Panc1 (cell line): ENCODE measurements at regions of chr9 and their contacts with region 1.

Region 1: DNA sequence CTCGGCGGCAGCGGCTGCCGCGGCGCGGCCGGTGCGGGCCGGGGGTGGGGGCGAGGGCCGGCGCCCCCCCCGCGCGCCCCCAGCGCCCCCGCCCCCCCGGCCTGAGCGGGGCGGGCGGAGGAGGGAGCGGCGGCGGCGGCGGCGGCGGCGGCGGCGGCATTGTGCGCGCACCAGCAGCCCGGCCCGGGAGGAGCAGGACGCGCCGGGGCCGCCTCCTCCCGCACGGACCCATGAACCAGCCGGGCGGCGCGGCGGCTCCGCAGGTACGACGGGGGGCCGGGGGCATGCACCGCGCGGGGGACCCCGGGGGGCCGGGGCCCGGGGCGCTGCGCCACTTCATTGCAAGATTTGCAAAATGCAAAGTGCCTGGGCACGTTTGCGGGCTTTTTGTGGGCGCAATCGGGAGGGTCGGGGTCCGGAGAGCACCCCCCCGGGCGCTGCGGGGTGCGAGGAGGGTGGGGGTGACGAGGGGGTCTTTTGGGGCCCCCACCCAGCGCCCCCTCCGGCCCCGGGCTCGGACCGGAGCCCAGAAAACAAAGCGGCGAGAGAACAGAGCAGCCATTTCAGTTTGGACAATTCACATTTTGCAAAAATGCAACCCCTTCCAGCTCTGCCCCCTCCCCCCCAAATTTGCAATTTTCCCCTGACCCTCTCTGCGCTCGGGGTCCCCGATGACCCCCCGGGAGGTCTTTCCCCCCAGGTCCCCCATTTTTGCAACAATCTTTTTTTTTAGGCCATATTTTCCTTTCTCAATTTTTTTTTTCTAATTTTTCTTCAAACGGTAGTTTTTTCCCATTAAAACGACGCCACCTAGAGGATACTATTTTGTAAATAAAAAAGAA is at the start of gene ZNF618:
- DNase-seq: no peak
- ATAC-seq: peak; percentile 98
- H3K4me3 ChIP-seq: peak within 1 kb of the TSS; percentile 50 to 53
- H3K27ac ChIP-seq: no peak within 1 kb of the TSS
- H3K4me1 ChIP-seq: no peaks in the 10 kb centered on the region
- H3K27me3 ChIP-seq: peaks cover 3% of the 10 kb centered on the region; the same call in 1 of the 2 replicates
- CTCF ChIP-seq: peak; percentile 50
- total RNA-seq, gene ZNF618: 1.8 TPM

Region 2: GRCh38 chr9:113682297-113682771 is 194.0 kb before region 1 on chr9:
- CTCF ChIA-PET with region 1: interaction called, 3 read pairs
- POLR2A ChIA-PET with region 1: no interaction called
- in situ Hi-C with region 1: no loop called
- intact Hi-C with region 1: loop called (anchors 10 kb)
- DNase-seq: peak; percentile 67
- ATAC-seq: peak; percentile 76
- H3K4me3 ChIP-seq: peak overlapping the region in 1 of 2 experiments; percentile 16; a peak in 1 of 4 replicates
- H3K27ac ChIP-seq: no peak overlapping the region
- H3K4me1 ChIP-seq: no peaks in the 10 kb centered on the region
- H3K27me3 ChIP-seq: peaks cover 4% of the 10 kb centered on the region
- CTCF ChIP-seq: peak; percentile 87

Region 3: DNA sequence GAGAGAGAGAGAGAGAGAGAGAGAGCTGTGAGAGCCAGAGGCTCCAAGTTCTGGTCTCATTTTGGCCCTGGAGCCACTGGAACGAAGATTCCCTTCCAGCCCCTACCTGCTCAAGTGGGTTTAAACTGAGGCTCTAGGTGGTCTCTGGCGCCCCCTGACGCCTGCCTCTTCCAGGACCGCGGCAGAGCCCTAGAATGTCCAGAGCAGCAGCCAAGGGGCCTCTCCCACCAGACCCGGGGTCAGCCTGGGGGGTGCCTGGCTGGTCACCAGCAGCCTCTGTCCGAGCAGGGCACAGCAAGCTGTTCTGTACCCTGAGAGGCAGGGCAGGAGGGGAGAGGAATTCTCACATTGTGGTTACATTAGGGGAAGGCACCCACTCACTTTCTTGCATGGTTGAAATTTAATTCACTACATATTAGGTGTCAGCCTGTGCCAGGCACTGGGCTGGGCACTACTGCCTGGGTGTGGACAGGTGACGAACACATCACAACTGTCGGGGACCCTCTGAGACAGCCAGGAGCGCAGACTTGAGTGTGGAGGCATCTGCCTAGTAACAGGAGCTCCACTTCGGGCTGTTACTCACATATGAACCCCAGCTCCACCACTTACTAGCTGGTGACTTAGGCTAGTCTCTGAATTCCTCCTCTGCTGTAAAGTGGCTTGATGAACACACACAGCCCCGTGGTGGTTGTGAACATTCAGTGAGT is 157.2 kb after region 1 on chr9:
- CTCF ChIA-PET with region 1: no interaction called
- POLR2A ChIA-PET with region 1: no interaction called
- in situ Hi-C with region 1: no loop called
- intact Hi-C with region 1: loop called (anchors 5 kb)
- DNase-seq: no peak
- ATAC-seq: peak; percentile 76
- H3K4me3 ChIP-seq: no peak overlapping the region
- H3K27ac ChIP-seq: no peak overlapping the region
- H3K4me1 ChIP-seq: no peaks in the 10 kb centered on the region
- H3K27me3 ChIP-seq: no peaks in the 10 kb centered on the region
- CTCF ChIP-seq: peak; percentile 66

Region 4: DNA sequence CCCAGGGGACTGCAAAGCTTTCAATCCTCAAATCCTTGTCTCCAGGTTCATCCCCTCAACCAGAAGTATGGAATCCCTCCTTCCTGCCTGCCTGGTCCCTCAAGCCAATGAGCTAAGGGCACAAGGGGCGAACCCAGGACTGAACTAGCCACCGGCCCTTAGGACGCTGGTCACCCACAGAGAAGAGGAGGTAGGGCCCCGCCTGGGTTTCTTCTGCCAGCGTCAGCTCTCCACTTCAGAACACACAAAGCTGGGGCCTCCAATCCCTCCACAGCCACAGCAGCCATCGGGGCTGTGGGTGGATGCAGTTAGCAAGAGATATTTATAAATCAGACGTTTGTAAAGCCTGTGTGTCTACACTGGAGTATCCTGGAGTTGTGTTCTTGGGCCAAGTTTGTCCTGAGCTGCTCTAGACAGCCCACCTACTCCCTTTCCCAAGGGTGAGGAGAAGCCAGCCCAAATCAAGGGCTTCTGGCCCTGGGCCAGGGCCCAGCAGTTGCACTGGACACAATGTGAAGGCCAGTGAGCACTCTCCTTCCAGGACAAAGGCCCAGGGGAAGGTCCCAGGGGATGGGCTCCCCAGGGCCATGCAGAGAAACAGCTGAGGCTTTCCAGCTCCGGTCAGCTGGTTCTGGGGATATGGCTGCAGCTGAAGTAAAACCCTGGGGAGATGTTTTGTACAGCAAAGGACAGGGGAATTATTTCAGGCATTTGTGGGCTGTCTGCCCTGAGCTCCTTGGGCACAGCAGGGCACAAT is 182.9 kb after region 1 on chr9:
- CTCF ChIA-PET with region 1: no interaction called
- POLR2A ChIA-PET with region 1: no interaction called
- in situ Hi-C with region 1: no loop called
- intact Hi-C with region 1: no loop called
- DNase-seq: no peak
- ATAC-seq: no peak
- H3K4me3 ChIP-seq: no peak overlapping the region
- H3K27ac ChIP-seq: no peak overlapping the region
- H3K4me1 ChIP-seq: no peaks in the 10 kb centered on the region
- H3K27me3 ChIP-seq: 0 out of 2 replicates have a peak, but pooled peaks cover 2% of the 10 kb centered on the region
- CTCF ChIP-seq: no peak